ENCODE measurements at regions of chr9 and their contacts with region 1.

Region 1: DNA sequence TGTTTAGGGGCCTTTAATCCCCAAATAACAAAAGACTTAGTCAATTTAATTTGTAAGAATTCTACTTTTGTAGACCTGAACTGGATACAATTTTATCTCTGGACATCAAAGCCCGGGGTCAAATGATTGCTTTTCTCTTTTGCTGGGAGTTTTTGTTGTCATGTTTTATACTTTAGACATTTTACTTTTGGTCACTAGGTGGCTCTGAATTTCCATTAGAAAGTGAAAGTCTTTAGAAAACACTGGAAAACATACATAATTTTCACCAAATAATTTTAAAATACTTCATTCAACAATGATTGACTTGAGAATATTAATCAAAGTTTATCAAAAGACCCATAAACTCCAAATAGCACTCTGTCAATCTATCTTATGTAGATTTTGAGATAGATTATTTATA is 2.8 kb upstream of the PCA3 start:
- DNase-seq: no peak
- H3K4me3 Mint-ChIP-seq: no peak overlapping the region
- H3K27ac Mint-ChIP-seq: no peak overlapping the region
- H3K4me1 Mint-ChIP-seq: no peaks in the 10 kb centered on the region
- H3K27me3 Mint-ChIP-seq: peaks cover 53% of the 10 kb centered on the region
- CTCF ChIP-seq: no peak

Region 2: GRCh38 chr9:77149879-77150278 is 388.4 kb after region 1 on chr9:
- CTCF ChIA-PET with region 1: no interaction called
- intact Hi-C with region 1: loop called (anchors 5 kb)
- DNase-seq: no peak
- H3K4me3 Mint-ChIP-seq: no peak overlapping the region
- H3K27ac Mint-ChIP-seq: no peak overlapping the region
- H3K4me1 Mint-ChIP-seq: no peaks in the 10 kb centered on the region
- H3K27me3 Mint-ChIP-seq: peaks cover 48% of the 10 kb centered on the region
- CTCF ChIP-seq: no peak